Dorsolateral prefrontal cortex (tissue), 120 donors: ENCODE measurements at regions of chr6 and their contacts with region 1.

Region 1: GRCh38 chr6:142746524-142746923 is 198.5 kb downstream of the HIVEP2 start:
- DNase-seq: peak in 1 of 10 donors; percentile 40
- H3K4me3 ChIP-seq: no peak overlapping the region
- H3K27ac ChIP-seq: peak overlapping the region in 1 of 59 donors; percentile 9
- H3K27me3 ChIP-seq: no peaks in the 10 kb centered on the region
- CTCF ChIP-seq: peak in 52 of 56 donors; percentile 25 to 71 (median 52)

Region 2: GRCh38 chr6:142802124-142802523 is 55.6 kb after region 1 on chr6:
- intact Hi-C with region 1: loop called in 1 of 2 experiments (anchors 5 kb)
- DNase-seq: peak in 1 of 10 donors; percentile 47
- H3K4me3 ChIP-seq: no peak overlapping the region
- H3K27ac ChIP-seq: peak overlapping the region in 3 of 59 donors; percentile 2 to 34 (median 5)
- H3K27me3 ChIP-seq: no peaks in the 10 kb centered on the region
- CTCF ChIP-seq: no peak